ENCODE measurements at regions of chr10 and their contacts with region 1.

Region 1: DNA sequence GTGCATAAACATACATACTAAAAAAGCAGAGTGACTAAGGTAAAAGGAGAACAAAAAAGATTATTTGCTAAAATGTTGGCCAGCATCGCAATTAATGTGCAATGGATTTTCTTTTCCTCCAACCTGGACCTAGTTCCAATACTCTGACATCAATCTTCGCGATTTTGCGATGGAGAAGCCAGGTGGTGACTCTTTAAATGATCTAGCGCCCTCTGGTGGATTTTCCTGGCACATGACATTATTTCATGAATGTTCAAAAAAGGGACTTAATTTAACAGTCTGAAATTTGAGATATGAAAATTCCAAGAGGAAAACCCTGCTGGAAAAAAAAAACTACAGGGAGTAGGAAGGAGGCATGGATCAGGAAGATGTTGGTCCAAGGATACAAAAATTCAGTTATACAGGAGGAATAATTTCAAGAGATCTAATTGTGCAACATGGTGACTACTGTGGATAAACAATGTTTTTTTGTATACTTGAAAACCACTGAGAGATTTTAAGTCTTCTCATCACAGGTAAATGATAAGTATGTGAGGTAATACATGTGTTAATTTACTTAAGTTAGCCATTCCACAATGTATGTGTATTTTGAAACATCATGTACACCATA is 4.3 kb upstream of the KCNMA1 start:
- DNase-seq: no peak

Region 2: GRCh38 chr10:77173615-77174461 is 468.1 kb before region 1 on chr10:
- intact Hi-C with region 1: loop called (anchors 2 to 5 kb)
- DNase-seq: peak; percentile 85

Region 3: GRCh38 chr10:77405771-77406241 is 236.1 kb before region 1 on chr10:
- intact Hi-C with region 1: loop called in 1 of 2 experiments (anchors 5 kb)
- DNase-seq: peak; percentile 89

Region 4: DNA sequence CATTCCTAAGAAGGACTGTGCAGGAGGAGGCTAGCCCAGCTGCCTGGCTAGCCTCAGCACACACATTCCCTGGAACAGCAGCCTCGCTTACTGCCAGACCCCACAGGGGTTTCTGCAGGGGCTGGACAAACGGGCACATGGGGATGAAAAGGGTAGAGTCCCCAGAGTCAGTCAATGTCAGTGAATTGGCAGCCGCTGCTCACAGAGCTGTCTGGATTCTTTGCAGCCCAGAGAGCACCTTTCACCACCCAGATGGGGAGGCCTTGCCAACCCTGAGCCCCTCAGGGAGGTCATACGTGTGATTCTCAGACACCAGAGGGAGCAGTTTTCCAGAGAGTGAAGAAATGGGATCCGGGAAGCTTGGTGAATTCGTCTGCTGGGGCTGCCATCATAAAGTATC is 147.6 kb before region 1 on chr10:
- intact Hi-C with region 1: loop called (anchors 5 to 10 kb)
- DNase-seq: no peak